ENCODE measurements at regions of chr9 and their contacts with region 1.

Region 1: GRCh38 chr9:35071814-35072460 is 488 bp downstream of the VCP start:
- DNase-seq: peak; percentile 83
- ATAC-seq: peak; percentile 47
- H3K4me3 Mint-ChIP-seq: peak overlapping the region; percentile 91
- H3K27ac Mint-ChIP-seq: peak overlapping the region; percentile 95
- H3K4me1 Mint-ChIP-seq: peaks cover 56% of the 10 kb centered on the region
- H3K27me3 Mint-ChIP-seq: no peaks in the 10 kb centered on the region

Region 2: DNA sequence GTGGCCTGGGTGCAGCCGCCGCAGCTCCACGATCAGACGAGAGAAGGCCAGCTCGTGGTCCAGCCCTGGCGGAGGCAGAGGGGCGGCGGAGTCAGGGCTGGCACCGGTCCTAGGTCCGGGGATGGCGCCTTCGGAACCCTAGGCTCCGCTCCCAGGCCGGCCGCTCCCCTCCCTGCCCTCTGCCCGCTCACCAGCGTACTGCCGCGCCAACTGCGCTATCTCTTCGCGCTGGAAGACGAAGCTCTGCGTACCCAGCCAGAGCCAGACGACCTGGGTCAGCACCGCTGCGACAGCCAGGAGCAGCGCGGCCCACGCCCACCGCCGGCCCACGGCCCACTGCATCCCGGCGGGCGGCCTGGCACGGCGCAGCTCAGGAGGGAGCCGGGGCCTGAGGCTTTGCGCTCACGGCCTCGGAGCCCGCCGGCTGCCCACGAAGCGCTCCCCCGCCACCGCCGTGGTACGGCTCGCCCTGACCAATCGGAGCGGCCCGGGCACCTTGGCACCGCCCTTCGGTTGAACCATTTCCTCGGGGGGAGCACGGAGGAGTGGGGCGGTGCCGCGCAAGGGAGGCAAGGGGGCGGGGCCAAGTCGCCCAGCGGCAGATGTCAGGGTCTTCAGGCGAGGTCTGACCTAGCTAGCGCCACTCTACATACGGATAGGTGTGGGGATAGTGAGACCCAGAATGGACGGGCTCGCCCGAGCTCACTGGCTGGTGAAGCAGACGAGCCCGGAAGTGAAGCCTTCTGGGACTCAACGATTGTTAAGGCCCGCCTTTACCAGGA is 434.4 kb before region 1 on chr9 and contains the start of gene SIGMAR1:
- CTCF ChIA-PET with region 1: no interaction called
- POLR2A ChIA-PET with region 1: no interaction called
- intact Hi-C with region 1: loop called in 1 of 2 experiments (anchors 5 kb)
- DNase-seq: peak; percentile 96
- ATAC-seq: peak; percentile 94
- H3K4me3 Mint-ChIP-seq: peak within 1 kb of the TSS; percentile 84
- H3K27ac Mint-ChIP-seq: peak within 1 kb of the TSS; percentile 92
- H3K4me1 Mint-ChIP-seq: peaks cover 40% of the 10 kb centered on the region
- H3K27me3 Mint-ChIP-seq: no peaks in the 10 kb centered on the region
- total RNA-seq, gene SIGMAR1: 63.6 to 68.0 TPM

Region 3: DNA sequence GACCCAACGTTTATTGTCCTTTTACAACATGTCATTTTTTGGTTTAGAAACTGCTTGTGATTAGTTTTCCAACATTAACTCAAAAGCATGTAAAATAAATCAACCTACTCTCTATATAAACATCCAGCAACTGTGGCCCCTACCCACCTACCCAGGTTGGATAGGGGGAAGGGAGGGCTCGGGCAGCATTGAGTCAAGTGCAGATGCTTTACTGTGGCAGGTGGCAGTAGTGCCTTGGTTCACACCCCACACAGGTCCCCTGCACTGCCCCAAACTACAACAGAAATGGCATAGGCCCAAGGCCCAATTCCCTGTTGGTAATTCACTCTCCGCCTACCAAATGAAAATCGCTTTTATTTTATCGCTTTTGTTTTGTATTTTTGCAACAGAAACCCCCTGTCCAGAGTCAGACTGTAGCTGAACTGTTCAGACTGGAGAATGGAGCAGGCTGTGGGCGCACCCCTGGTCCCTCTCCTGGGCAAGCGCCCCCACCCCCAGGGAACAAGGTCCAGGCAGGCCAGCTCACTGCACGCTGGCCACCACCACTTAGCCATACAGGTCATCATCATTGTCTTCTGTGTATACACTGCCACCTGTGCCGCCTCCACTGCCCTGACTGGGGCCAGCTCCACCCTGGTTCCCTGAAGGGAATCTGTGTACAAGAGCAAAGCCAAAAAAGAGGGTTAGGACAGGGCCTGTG is 15.2 kb before region 1 on chr9:
- CTCF ChIA-PET with region 1: interaction called, 15 read pairs
- POLR2A ChIA-PET with region 1: interaction called, 11 read pairs
- intact Hi-C with region 1: no loop called
- DNase-seq: no peak
- ATAC-seq: no peak
- H3K4me3 Mint-ChIP-seq: no peak overlapping the region
- H3K27ac Mint-ChIP-seq: no peak overlapping the region
- H3K4me1 Mint-ChIP-seq: no peaks in the 10 kb centered on the region
- H3K27me3 Mint-ChIP-seq: no peaks in the 10 kb centered on the region

Region 4: GRCh38 chr9:35102926-35103659 is 31.2 kb after region 1 on chr9 and contains the start of gene STOML2:
- CTCF ChIA-PET with region 1: interaction called, 54 read pairs
- POLR2A ChIA-PET with region 1: interaction called, 10 read pairs
- intact Hi-C with region 1: loop called in 1 of 2 experiments (anchors 1 kb)
- DNase-seq: peak; percentile 95
- ATAC-seq: peak; percentile 99
- H3K4me3 Mint-ChIP-seq: peak within 1 kb of the TSS; percentile 98
- H3K27ac Mint-ChIP-seq: peak within 1 kb of the TSS; percentile 98
- H3K4me1 Mint-ChIP-seq: peaks cover 25% of the 10 kb centered on the region
- H3K27me3 Mint-ChIP-seq: no peaks in the 10 kb centered on the region
- total RNA-seq, gene STOML2: 169 to 201 TPM

Region 5: DNA sequence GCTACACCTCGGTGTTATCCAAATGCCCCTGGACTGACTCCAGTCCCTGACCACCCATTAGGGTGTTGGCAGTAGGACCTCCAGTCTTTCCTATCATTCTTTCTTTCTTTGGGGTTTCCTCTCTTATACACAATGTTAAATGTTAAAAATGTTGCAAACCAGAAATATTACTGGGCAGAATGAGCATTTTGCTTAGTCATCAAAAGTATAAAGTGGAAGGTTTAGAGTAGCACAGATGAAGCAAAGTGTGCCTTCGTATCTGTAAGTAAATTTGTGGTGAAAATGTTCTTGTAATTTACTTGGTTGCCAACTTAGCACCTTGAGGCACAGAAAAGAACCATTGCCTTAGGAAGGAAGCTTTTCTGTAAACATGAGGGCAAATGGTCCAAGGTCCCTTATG is 68.2 kb after region 1 on chr9:
- CTCF ChIA-PET with region 1: no interaction called
- POLR2A ChIA-PET with region 1: no interaction called
- intact Hi-C with region 1: no loop called
- DNase-seq: no peak
- ATAC-seq: no peak
- H3K4me3 Mint-ChIP-seq: no peak overlapping the region
- H3K27ac Mint-ChIP-seq: no peak overlapping the region
- H3K4me1 Mint-ChIP-seq: no peaks in the 10 kb centered on the region
- H3K27me3 Mint-ChIP-seq: no peaks in the 10 kb centered on the region

Region 6: GRCh38 chr9:35569206-35569605 is 497.3 kb after region 1 on chr9:
- CTCF ChIA-PET with region 1: no interaction called
- POLR2A ChIA-PET with region 1: no interaction called
- intact Hi-C with region 1: loop called in 1 of 2 experiments (anchors 2 kb)
- DNase-seq: no peak
- ATAC-seq: no peak
- H3K4me3 Mint-ChIP-seq: peak overlapping the region; percentile 16
- H3K27ac Mint-ChIP-seq: peak overlapping the region; percentile 93
- H3K4me1 Mint-ChIP-seq: peaks cover 38% of the 10 kb centered on the region
- H3K27me3 Mint-ChIP-seq: no peaks in the 10 kb centered on the region